Activated naive CD4-positive, alpha-beta T cell treated with anti-CD3 and anti-CD28 coated beads for 36 hours (primary cell): ENCODE measurements at regions of chr3 and their contacts with region 1.

Region 1: GRCh38 chr3:141875374-141875892 is 1.0 kb upstream of the ATP1B3 start:
- DNase-seq: peak; percentile 90
- H3K4me3 Mint-ChIP-seq: peak overlapping the region; percentile 92
- H3K27ac Mint-ChIP-seq: peak overlapping the region; percentile 93
- H3K4me1 Mint-ChIP-seq: peaks cover 28% of the 10 kb centered on the region
- H3K27me3 Mint-ChIP-seq: no peaks in the 10 kb centered on the region

Region 2: GRCh38 chr3:140941434-140942220 is 933.8 kb before region 1 on chr3 and contains the start of gene SLC25A36:
- CTCF ChIA-PET with region 1: no interaction called
- intact Hi-C with region 1: loop called (anchors 5 kb)
- DNase-seq: peak; percentile 99
- H3K4me3 Mint-ChIP-seq: peak within 1 kb of the TSS; percentile 89
- H3K27ac Mint-ChIP-seq: peak within 1 kb of the TSS; percentile 88
- H3K4me1 Mint-ChIP-seq: peaks cover 35% of the 10 kb centered on the region
- H3K27me3 Mint-ChIP-seq: no peaks in the 10 kb centered on the region
- total RNA-seq, gene SLC25A36: 48.7 to 50.1 TPM

Region 3: DNA sequence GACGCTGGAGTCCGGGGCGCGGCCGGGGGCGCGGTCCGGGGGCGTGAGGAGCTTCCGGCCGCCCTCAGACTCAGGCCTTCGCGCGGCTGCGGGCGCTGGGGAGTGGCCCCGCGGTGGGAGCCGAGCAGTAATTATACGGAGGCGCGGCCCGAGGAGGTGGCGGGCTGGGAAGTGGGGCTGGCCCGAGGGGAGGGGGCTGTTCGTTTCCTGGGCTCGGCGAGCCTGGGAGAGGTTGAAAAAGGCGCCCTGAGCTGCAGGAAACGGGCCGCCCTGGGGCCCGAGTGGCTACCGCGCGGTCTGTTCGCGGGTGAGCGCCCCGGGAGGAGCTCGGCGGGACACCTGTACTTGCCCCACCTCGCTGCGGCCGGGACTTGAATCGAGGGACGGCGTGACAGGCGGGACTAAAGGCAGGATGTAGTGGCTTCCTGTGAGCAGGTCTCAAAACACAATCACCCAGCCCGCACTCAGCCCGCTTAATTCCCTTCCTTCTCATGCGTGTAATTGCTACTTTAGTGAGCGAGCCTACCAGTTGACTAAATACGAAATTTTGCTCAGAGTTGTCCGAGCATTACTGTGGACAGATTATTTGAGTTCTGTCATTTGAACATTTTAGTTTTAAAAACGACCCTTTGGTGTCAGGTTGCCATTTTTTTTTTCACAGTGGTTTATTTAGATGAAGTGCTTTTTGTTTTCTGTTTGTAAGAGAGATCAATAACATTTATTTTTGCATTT is 387.7 kb before region 1 on chr3:
- CTCF ChIA-PET with region 1: no interaction called
- intact Hi-C with region 1: loop called (anchors 2 kb)
- DNase-seq: peak; percentile 93
- H3K4me3 Mint-ChIP-seq: peak overlapping the region; percentile 87
- H3K27ac Mint-ChIP-seq: peak overlapping the region; percentile 94
- H3K4me1 Mint-ChIP-seq: peaks cover 68% of the 10 kb centered on the region
- H3K27me3 Mint-ChIP-seq: no peaks in the 10 kb centered on the region

Region 4: DNA sequence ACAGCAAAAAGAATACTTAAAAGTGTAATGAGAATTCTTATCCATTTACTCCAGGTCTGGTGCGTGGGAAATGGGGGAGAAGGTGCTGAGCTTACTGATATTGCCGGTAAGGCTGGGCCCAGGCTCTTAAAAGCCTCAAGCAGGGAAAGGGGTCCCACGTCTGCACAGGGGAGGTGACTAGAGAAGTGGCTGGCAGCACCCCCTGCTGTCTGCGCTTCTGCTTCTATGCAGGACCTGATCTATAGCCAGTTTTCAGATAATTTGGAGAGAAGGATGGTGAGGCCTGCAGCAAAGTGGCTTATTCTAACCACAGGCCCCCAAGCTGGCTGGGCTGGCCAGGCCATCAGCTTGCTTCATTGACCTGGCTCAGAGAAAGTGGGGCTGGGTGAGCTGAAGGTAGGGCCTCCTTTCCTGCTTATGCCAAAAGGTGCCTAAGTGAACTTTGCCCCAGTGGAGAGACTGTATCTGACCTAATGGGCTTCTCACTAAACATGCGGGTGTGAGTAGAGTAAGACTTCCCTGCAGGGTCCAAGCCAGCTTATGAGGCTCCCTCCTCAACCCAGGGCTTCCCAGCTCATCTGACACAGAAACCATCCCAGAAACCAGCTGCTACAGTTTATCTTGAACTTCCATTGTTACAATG is 29.9 kb before region 1 on chr3:
- CTCF ChIA-PET with region 1: interaction called, 4 read pairs
- intact Hi-C with region 1: loop called (anchors 1 kb)
- DNase-seq: peak; percentile 48
- H3K4me3 Mint-ChIP-seq: no peak overlapping the region
- H3K27ac Mint-ChIP-seq: no peak overlapping the region
- H3K4me1 Mint-ChIP-seq: peaks cover 13% of the 10 kb centered on the region
- H3K27me3 Mint-ChIP-seq: no peaks in the 10 kb centered on the region

Region 5: GRCh38 chr3:141913150-141913811 is 37.8 kb after region 1 on chr3:
- CTCF ChIA-PET with region 1: interaction called, 13 read pairs
- intact Hi-C with region 1: loop called (anchors 1 kb)
- DNase-seq: peak; percentile 72
- H3K4me3 Mint-ChIP-seq: no peak overlapping the region
- H3K27ac Mint-ChIP-seq: no peak overlapping the region
- H3K4me1 Mint-ChIP-seq: peaks cover 2% of the 10 kb centered on the region
- H3K27me3 Mint-ChIP-seq: no peaks in the 10 kb centered on the region

Region 6: DNA sequence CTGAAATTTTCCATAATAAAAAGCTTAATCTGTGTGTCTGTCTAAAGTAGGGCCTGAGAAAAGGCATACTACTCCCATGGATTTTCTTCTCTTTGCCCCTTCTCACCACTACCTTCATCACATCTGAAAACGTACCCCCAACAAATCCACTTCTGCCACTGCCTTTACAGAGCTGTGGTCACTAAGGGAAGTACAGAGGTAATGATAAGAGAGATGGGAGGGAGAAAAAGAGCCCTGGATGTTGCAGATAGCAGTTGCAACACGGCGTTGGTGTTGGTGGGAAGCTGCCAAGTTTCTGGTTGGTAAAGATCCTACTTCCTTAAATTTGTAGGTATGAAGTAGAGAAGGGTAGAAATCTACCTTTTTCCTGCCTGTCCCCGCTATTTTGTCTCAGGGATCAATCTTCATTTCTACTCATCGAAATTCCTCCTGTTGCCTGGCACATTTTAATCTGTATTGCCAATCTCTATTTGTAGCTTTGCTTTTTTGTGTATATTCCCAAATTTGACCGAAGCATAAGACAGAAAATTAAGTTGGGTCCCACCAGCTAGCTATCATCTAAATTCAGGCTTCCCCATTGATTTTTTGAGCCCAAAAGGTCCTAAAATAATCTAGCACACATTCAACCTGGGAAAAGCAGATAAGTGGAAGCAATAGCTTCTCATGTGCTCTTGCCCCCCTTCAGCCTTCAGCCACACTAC is 171.0 kb after region 1 on chr3:
- CTCF ChIA-PET with region 1: no interaction called
- intact Hi-C with region 1: no loop called
- DNase-seq: no peak
- H3K4me3 Mint-ChIP-seq: no peak overlapping the region
- H3K27ac Mint-ChIP-seq: no peak overlapping the region
- H3K4me1 Mint-ChIP-seq: no peaks in the 10 kb centered on the region
- H3K27me3 Mint-ChIP-seq: no peaks in the 10 kb centered on the region

Region 7: GRCh38 chr3:142148792-142149672 is 273.6 kb after region 1 on chr3 and contains the start of gene TFDP2:
- CTCF ChIA-PET with region 1: no interaction called
- intact Hi-C with region 1: loop called (anchors 5 kb)
- DNase-seq: peak; percentile 89
- H3K4me3 Mint-ChIP-seq: peak within 1 kb of the TSS; percentile 84
- H3K27ac Mint-ChIP-seq: no peak within 1 kb of the TSS
- H3K4me1 Mint-ChIP-seq: peaks cover 24% of the 10 kb centered on the region
- H3K27me3 Mint-ChIP-seq: no peaks in the 10 kb centered on the region
- total RNA-seq, gene TFDP2: 23.0 to 25.0 TPM